A673 (cell line): ENCODE measurements at regions of chr4 and their contacts with region 1.

Region 1: GRCh38 chr4:121900132-121900983 is 30.1 kb upstream of the BBS7 start:
- DNase-seq: peak; percentile 65
- H3K4me3 ChIP-seq: no peak overlapping the region
- H3K27ac ChIP-seq: no peak overlapping the region
- H3K4me1 ChIP-seq: no peaks in the 10 kb centered on the region
- H3K27me3 ChIP-seq: no peaks in the 10 kb centered on the region
- CTCF ChIP-seq: peak; percentile 73

Region 2: DNA sequence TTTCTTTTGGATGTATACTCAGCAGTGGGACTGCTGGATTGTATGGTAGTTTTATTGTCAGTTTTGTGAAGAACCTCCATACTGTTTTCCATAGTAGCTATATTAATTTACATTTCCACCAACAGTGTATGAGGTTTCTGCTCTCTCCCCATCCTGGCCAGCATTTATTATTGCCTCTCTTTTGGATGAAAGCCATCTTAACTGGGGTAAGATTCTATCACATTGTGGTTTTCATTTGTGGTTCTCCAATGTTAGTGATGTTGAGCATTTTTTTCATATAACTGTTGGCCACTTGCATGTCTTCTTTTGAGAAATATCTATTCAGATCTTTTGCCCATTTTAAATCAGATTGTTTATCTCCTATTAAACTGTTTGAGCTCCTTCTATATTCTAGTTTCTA is 547.1 kb before region 1 on chr4:
- CTCF ChIA-PET with region 1: no interaction called
- POLR2A ChIA-PET with region 1: no interaction called
- intact Hi-C with region 1: no loop called
- DNase-seq: no peak
- H3K4me3 ChIP-seq: no peak overlapping the region
- H3K27ac ChIP-seq: no peak overlapping the region
- H3K4me1 ChIP-seq: peaks cover 6% of the 10 kb centered on the region
- H3K27me3 ChIP-seq: no peaks in the 10 kb centered on the region
- CTCF ChIP-seq: no peak

Region 3: GRCh38 chr4:122218762-122219161 is 318.4 kb after region 1 on chr4:
- CTCF ChIA-PET with region 1: no interaction called
- POLR2A ChIA-PET with region 1: no interaction called
- intact Hi-C with region 1: loop called (anchors 5 kb)
- DNase-seq: peak; percentile 40
- H3K4me3 ChIP-seq: no peak overlapping the region
- H3K27ac ChIP-seq: no peak overlapping the region
- H3K4me1 ChIP-seq: no peaks in the 10 kb centered on the region
- H3K27me3 ChIP-seq: no peaks in the 10 kb centered on the region
- CTCF ChIP-seq: peak; percentile 50

Region 4: GRCh38 chr4:122309988-122310626 is 409.7 kb after region 1 on chr4:
- CTCF ChIA-PET with region 1: no interaction called
- POLR2A ChIA-PET with region 1: no interaction called
- intact Hi-C with region 1: loop called (anchors 5 kb)
- DNase-seq: peak; percentile 30
- H3K4me3 ChIP-seq: no peak overlapping the region
- H3K27ac ChIP-seq: no peak overlapping the region
- H3K4me1 ChIP-seq: no peaks in the 10 kb centered on the region
- H3K27me3 ChIP-seq: no peaks in the 10 kb centered on the region
- CTCF ChIP-seq: peak; percentile 68

Region 5: DNA sequence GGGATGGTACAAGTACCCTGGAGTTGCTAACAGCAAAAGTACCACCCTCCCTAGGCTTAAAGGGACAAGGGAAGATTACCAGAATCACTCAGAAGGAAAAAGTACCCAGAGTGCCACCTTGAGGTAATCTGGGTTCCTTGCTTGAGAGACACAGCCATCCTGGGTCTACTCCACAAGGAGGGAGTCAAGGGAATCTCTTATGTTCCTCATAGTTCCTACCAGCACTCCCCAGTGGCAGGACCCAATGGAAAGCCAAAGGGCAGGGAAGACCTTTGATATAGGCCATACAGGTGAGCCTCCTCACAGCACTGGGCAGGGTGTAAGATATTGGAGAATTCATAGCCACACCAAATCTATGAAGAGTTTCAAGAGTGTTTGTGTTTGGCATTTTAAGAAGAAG is 550.5 kb after region 1 on chr4:
- CTCF ChIA-PET with region 1: no interaction called
- POLR2A ChIA-PET with region 1: no interaction called
- intact Hi-C with region 1: loop called (anchors 5 kb)
- DNase-seq: peak; percentile 64
- H3K4me3 ChIP-seq: no peak overlapping the region
- H3K27ac ChIP-seq: no peak overlapping the region
- H3K4me1 ChIP-seq: no peaks in the 10 kb centered on the region
- H3K27me3 ChIP-seq: no peaks in the 10 kb centered on the region
- CTCF ChIP-seq: peak; percentile 57